IMR-90 (cell line): ENCODE measurements at regions of chr2 and their contacts with region 1.

Region 1: GRCh38 chr2:74092275-74092674 is 55.4 kb downstream of the BOLA3 start:
- DNase-seq: no peak
- ATAC-seq: no peak
- H3K4me3 ChIP-seq: no peak overlapping the region
- H3K27ac ChIP-seq: no peak overlapping the region
- H3K4me1 ChIP-seq: no peaks in the 10 kb centered on the region
- H3K27me3 ChIP-seq: no peaks in the 10 kb centered on the region
- CTCF ChIP-seq: no peak
- POLR2A ChIP-seq: no peak
- RAD21 ChIP-seq: no peak

Region 2: GRCh38 chr2:74066518-74067203 is 25.6 kb before region 1 on chr2:
- CTCF ChIA-PET with region 1: no interaction called
- POLR2A ChIA-PET with region 1: interaction called, 14 read pairs
- dilution Hi-C with region 1: no loop called
- in situ Hi-C with region 1: no loop called
- intact Hi-C with region 1: no loop called
- DNase-seq: no peak
- ATAC-seq: no peak
- H3K4me3 ChIP-seq: no peak overlapping the region
- H3K27ac ChIP-seq: no peak overlapping the region
- H3K4me1 ChIP-seq: peaks cover 2% of the 10 kb centered on the region; the same call in 1 of the 2 replicates
- H3K27me3 ChIP-seq: no peaks in the 10 kb centered on the region
- CTCF ChIP-seq: no peak
- POLR2A ChIP-seq: no peak
- RAD21 ChIP-seq: no peak

Region 3: GRCh38 chr2:74317701-74318301 is 225.5 kb after region 1 on chr2:
- CTCF ChIA-PET with region 1: no interaction called
- POLR2A ChIA-PET with region 1: no interaction called
- dilution Hi-C with region 1: no loop called
- in situ Hi-C with region 1: no loop called
- intact Hi-C with region 1: no loop called
- DNase-seq: no peak
- ATAC-seq: no peak
- H3K4me3 ChIP-seq: no peak overlapping the region
- H3K27ac ChIP-seq: no peak overlapping the region
- H3K4me1 ChIP-seq: no peaks in the 10 kb centered on the region
- H3K27me3 ChIP-seq: peaks cover 19% of the 10 kb centered on the region
- CTCF ChIP-seq: no peak
- POLR2A ChIP-seq: no peak
- RAD21 ChIP-seq: no peak

Region 4: GRCh38 chr2:75146606-75147332 is 1054.5 kb after region 1 on chr2:
- CTCF ChIA-PET with region 1: no interaction called
- POLR2A ChIA-PET with region 1: no interaction called
- dilution Hi-C with region 1: no loop called
- in situ Hi-C with region 1: no loop called
- intact Hi-C with region 1: no loop called
- DNase-seq: peak; percentile 12
- ATAC-seq: no peak
- H3K4me3 ChIP-seq: no peak overlapping the region
- H3K27ac ChIP-seq: no peak overlapping the region
- H3K4me1 ChIP-seq: no peaks in the 10 kb centered on the region
- H3K27me3 ChIP-seq: peaks cover 4% of the 10 kb centered on the region
- CTCF ChIP-seq: no peak
- POLR2A ChIP-seq: no peak
- RAD21 ChIP-seq: no peak